Activated naive CD8-positive, alpha-beta T cell treated with anti-CD3 and anti-CD28 coated beads, Interleukin-2, amount 10 ng/mL, durations not matched to agents 7 days and 5 days (primary cell): ENCODE measurements at regions of chr7 and their contacts with region 1.

Region 1: GRCh38 chr7:132430861-132431822 is 145.1 kb downstream of the PLXNA4 start:
- DNase-seq: peak; percentile 69
- ATAC-seq: peak; percentile 92
- H3K4me3 Mint-ChIP-seq: peak overlapping the region; percentile 31
- H3K27ac Mint-ChIP-seq: peak overlapping the region; percentile 84
- H3K4me1 Mint-ChIP-seq: peaks cover 82% of the 10 kb centered on the region
- H3K27me3 Mint-ChIP-seq: no peaks in the 10 kb centered on the region

Region 2: GRCh38 chr7:132160611-132161532 is 270.3 kb before region 1 on chr7:
- POLR2A ChIA-PET with region 1: no interaction called
- DNase-seq: no peak
- ATAC-seq: no peak
- H3K4me3 Mint-ChIP-seq: no peak overlapping the region
- H3K27ac Mint-ChIP-seq: no peak overlapping the region
- H3K4me1 Mint-ChIP-seq: no peaks in the 10 kb centered on the region
- H3K27me3 Mint-ChIP-seq: peaks cover 6% of the 10 kb centered on the region

Region 3: GRCh38 chr7:132455378-132455777 is 24.2 kb after region 1 on chr7:
- POLR2A ChIA-PET with region 1: interaction called, 24 read pairs
- DNase-seq: no peak
- ATAC-seq: peak; percentile 25
- H3K4me3 Mint-ChIP-seq: peak overlapping the region; percentile 34
- H3K27ac Mint-ChIP-seq: peak overlapping the region; percentile 91
- H3K4me1 Mint-ChIP-seq: peaks cover 77% of the 10 kb centered on the region
- H3K27me3 Mint-ChIP-seq: no peaks in the 10 kb centered on the region

Region 4: DNA sequence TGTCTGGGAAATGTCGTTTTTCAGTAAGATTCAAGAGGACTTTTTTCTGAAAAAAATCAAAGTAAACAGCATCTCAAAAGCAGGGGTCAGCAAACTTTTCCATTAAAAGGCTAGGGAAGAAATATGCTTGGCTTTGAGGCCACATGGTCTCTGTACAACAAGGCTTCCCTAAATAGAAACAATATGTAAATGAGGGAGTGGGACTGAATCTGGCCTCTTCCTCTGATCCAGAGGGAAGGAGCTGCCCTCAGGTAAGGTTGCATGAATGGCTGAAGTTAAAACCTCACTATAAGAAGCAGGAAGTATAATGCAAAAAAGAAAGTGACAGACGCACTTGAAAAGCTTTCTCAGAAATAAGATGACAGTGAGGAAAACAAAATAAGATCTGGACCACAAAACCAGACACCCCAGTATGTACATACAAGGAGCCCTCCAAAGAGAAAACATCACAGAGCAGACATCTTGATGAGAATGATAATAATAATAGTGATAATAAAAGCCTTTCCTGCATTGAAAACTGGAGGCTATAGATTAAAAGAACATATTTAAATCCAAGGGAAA is 30.0 kb after region 1 on chr7:
- POLR2A ChIA-PET with region 1: interaction called, 24 read pairs
- DNase-seq: no peak
- ATAC-seq: peak; percentile 90
- H3K4me3 Mint-ChIP-seq: peak overlapping the region; percentile 61
- H3K27ac Mint-ChIP-seq: peak overlapping the region; percentile 86
- H3K4me1 Mint-ChIP-seq: peaks cover 60% of the 10 kb centered on the region
- H3K27me3 Mint-ChIP-seq: no peaks in the 10 kb centered on the region